ENCODE measurements at regions of chr9 and their contacts with region 1.

Region 1: GRCh38 chr9:127916665-127917613 is at the start of gene ST6GALNAC4:
- DNase-seq: peak; percentile 97
- ATAC-seq: peak; percentile 96
- H3K4me3 Mint-ChIP-seq: peak within 1 kb of the TSS; percentile 87
- H3K27ac Mint-ChIP-seq: peak within 1 kb of the TSS; percentile 93
- H3K4me1 Mint-ChIP-seq: peaks cover 53% of the 10 kb centered on the region
- H3K27me3 Mint-ChIP-seq: no peaks in the 10 kb centered on the region
- CTCF ChIP-seq: no peak
- total RNA-seq, gene ST6GALNAC4: 34.3 to 34.9 TPM

Region 2: DNA sequence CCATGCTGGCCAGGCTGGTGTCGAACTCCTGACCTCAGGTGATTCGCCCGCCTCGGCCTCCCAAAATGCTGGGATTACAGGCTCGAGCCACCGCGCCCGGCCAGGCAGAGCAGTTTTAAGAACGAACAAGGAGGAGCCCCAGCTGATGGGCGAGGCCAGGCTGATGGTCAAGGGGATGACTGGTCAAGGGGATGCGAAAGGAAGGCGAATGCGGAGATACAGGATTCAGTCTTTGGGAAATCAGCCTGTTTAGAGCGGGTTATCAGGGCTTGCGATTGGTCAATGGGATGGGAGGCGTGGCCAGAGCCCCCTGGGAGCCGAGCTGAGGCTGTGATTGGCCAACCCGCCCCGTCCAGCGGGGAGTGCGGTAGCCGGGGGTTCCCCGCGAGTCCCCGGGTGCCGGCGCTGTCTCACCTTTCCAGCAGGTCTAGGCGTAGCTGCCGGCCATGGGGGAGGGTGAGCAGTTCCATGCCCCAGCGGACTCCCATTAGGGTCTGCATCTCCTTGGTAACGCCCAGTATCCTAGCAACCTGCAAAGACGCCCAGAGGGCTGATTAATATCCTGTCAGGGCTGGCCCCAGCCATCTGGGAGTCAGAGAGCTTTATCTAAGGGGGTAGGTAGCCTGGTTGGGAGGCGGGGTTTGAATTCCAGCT is 174.4 kb before region 1 on chr9:
- CTCF ChIA-PET with region 1: interaction called, 15 read pairs
- POLR2A ChIA-PET with region 1: no interaction called
- intact Hi-C with region 1: no loop called
- DNase-seq: no peak
- ATAC-seq: peak; percentile 12
- H3K4me3 Mint-ChIP-seq: no peak overlapping the region
- H3K27ac Mint-ChIP-seq: peak overlapping the region; percentile 46
- H3K4me1 Mint-ChIP-seq: peaks cover 10% of the 10 kb centered on the region
- H3K27me3 Mint-ChIP-seq: no peaks in the 10 kb centered on the region
- CTCF ChIP-seq: no peak

Region 3: GRCh38 chr9:127785023-127785932 is 131.7 kb before region 1 on chr9:
- CTCF ChIA-PET with region 1: interaction called, 38 read pairs
- POLR2A ChIA-PET with region 1: interaction called, 8 read pairs
- intact Hi-C with region 1: loop called (anchors 5 kb)
- DNase-seq: peak; percentile 90
- ATAC-seq: peak; percentile 37
- H3K4me3 Mint-ChIP-seq: peak overlapping the region; percentile 97
- H3K27ac Mint-ChIP-seq: peak overlapping the region; percentile 95
- H3K4me1 Mint-ChIP-seq: peaks cover 72% of the 10 kb centered on the region
- H3K27me3 Mint-ChIP-seq: no peaks in the 10 kb centered on the region
- CTCF ChIP-seq: peak; percentile 86

Region 4: DNA sequence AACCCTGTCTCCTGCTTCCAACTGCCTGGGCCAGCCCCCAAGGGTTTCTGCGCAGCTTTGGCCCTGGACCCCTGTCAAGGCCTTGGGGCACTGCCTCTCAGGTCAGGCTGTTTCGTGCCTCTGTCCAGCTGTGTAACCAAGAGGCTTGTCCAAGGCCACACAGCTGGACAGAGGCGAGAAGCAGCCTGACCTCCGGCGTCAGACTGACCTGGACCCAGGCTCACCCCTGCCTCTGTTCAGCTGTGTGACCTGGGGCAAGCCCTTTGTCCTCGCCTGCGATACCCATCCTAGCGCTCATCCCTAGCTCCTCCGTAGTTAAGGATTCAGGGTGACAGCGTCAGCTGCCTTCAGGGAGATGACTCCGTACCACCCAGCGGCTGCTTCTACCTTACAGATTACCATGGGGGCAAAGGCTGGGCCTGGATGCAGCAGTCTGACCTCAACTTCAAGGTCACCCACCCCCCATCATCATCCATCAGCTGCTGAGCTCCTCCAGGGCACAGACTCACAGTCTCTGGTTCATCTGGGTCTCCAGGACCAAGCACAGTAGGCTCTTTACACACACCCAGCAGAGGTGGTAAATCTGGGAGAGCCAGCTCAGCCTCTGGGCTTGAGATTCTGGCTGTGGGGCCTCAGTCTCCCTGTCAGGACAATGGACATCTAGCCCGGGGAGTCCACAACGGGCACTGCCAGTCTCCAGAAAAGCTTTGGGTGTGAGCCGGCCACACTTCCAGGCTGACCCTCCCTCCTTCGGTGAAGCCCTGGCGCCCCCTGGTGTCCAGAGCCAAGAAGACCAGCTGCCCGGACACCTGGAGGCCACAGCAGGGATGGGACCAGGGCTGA is 47.4 kb before region 1 on chr9:
- CTCF ChIA-PET with region 1: interaction called, 46 read pairs
- POLR2A ChIA-PET with region 1: interaction called, 3 read pairs
- intact Hi-C with region 1: no loop called
- DNase-seq: peak; percentile 87
- ATAC-seq: peak; percentile 87
- H3K4me3 Mint-ChIP-seq: no peak overlapping the region
- H3K27ac Mint-ChIP-seq: no peak overlapping the region
- H3K4me1 Mint-ChIP-seq: peaks cover 14% of the 10 kb centered on the region
- H3K27me3 Mint-ChIP-seq: no peaks in the 10 kb centered on the region
- CTCF ChIP-seq: peak; percentile 96

Region 5: DNA sequence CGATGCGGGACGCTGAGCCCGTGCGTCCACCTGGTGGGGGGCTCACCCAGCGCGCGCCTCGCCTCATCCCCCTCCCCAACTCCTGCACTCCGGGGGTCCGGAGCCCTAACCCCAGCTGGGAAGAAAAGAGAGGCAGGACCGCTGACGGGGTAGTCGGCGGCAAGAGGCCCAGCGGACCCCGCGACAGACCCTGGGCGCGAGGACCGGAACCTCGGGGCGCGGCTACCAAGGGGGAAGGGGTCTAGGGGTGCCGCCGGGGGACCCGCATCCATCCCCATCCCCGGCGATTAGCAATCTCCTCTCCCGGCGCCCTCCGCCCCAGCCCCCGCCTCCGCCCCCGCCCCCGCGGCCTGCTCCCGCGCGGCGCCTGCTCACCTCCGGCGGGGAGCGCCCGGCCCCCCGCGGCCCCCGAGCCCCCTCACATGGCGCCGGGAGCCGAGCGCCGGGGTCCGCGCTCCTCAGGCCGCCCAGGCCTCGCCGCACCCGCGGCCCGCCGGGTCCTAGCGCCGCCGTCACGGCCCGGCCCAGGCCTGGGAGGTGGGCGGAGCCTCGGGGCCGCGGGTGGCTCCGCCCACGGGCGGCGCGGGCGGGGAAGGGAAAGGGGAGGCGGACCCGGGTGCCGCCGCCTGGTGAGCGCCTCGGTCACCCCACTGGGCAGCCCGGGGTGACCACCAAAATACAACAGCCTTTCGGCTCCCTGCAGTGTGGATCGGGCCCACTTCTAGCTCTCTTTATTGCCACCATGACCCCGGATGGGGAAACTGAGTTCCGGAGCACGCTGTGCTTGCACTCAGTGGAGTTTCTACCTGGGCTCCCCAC is 17.6 kb before region 1 on chr9 and contains the start of gene ST6GALNAC6:
- CTCF ChIA-PET with region 1: interaction called, 11 read pairs
- POLR2A ChIA-PET with region 1: interaction called, 57 read pairs
- intact Hi-C with region 1: no loop called
- DNase-seq: peak; percentile 76
- ATAC-seq: peak; percentile 78
- H3K4me3 Mint-ChIP-seq: peak within 1 kb of the TSS; percentile 82
- H3K27ac Mint-ChIP-seq: peak within 1 kb of the TSS; percentile 83
- H3K4me1 Mint-ChIP-seq: peaks cover 37% of the 10 kb centered on the region
- H3K27me3 Mint-ChIP-seq: no peaks in the 10 kb centered on the region
- CTCF ChIP-seq: no peak
- total RNA-seq, gene ST6GALNAC6: 36.9 to 38.8 TPM

Region 6: GRCh38 chr9:127943731-127944144 is 26.8 kb after region 1 on chr9:
- CTCF ChIA-PET with region 1: interaction called, 10 read pairs
- POLR2A ChIA-PET with region 1: no interaction called
- intact Hi-C with region 1: no loop called
- DNase-seq: peak; percentile 88
- ATAC-seq: peak; percentile 93
- H3K4me3 Mint-ChIP-seq: no peak overlapping the region
- H3K27ac Mint-ChIP-seq: peak overlapping the region; percentile 86
- H3K4me1 Mint-ChIP-seq: peaks cover 29% of the 10 kb centered on the region
- H3K27me3 Mint-ChIP-seq: no peaks in the 10 kb centered on the region
- CTCF ChIP-seq: peak; percentile 95